Activated CD4-positive, alpha-beta T cell treated with anti-CD3 and anti-CD28 coated beads for 36 hours (primary cell): ENCODE measurements at regions of chr1 and their contacts with region 1.

Region 1: GRCh38 chr1:214281021-214281719 is at the start of gene SMYD2:
- DNase-seq: peak; percentile 82
- ATAC-seq: peak; percentile 74
- H3K4me3 Mint-ChIP-seq: peak within 1 kb of the TSS; percentile 92
- H3K27ac Mint-ChIP-seq: peak within 1 kb of the TSS; percentile 89
- H3K4me1 Mint-ChIP-seq: peaks cover 37% of the 10 kb centered on the region
- H3K27me3 Mint-ChIP-seq: no peaks in the 10 kb centered on the region
- total RNA-seq, gene SMYD2: 38.2 to 40.1 TPM

Region 2: GRCh38 chr1:213783893-213784292 is 497.3 kb before region 1 on chr1:
- CTCF ChIA-PET with region 1: no interaction called
- POLR2A ChIA-PET with region 1: no interaction called
- intact Hi-C with region 1: no loop called
- DNase-seq: no peak
- ATAC-seq: no peak
- H3K4me3 Mint-ChIP-seq: no peak overlapping the region
- H3K27ac Mint-ChIP-seq: no peak overlapping the region
- H3K4me1 Mint-ChIP-seq: peaks cover 15% of the 10 kb centered on the region
- H3K27me3 Mint-ChIP-seq: peaks cover 17% of the 10 kb centered on the region

Region 3: DNA sequence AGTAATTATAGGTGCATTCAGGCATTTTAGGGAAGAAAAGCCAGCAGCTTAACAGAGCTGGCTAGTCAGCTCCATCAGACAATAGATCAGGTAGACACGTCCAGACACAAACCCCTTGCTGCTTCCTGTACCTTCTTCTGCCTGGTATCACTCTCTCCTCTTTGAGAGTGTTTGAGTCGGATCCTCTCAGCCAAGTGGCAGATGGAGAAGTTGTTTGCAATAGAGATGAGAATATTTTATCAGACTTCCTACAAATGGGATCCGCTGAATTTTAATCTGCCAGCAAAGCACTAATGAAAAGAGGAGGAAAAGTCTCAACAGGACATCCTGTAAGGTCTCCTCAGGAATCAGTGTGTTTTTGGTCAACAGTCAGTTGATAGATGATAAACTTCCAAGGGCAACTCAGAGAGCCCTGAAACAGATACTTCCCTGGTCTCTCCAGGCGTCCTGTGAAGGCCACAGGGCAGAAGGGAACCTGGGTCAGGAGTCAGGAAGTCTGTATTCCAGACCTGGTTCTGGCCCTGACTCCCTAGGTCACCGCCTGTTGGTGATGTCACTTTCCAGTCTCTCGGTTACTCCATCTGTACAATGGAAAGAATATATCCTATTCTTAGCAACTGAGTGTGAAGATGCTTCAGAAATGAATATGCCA is 355.5 kb before region 1 on chr1:
- CTCF ChIA-PET with region 1: no interaction called
- POLR2A ChIA-PET with region 1: no interaction called
- intact Hi-C with region 1: no loop called
- DNase-seq: no peak
- ATAC-seq: no peak
- H3K4me3 Mint-ChIP-seq: no peak overlapping the region
- H3K27ac Mint-ChIP-seq: no peak overlapping the region
- H3K4me1 Mint-ChIP-seq: no peaks in the 10 kb centered on the region
- H3K27me3 Mint-ChIP-seq: no peaks in the 10 kb centered on the region

Region 4: GRCh38 chr1:214310010-214310409 is 28.8 kb after region 1 on chr1:
- CTCF ChIA-PET with region 1: no interaction called
- POLR2A ChIA-PET with region 1: no interaction called
- intact Hi-C with region 1: loop called in 1 of 2 experiments (anchors 2 kb)
- DNase-seq: no peak
- ATAC-seq: peak; percentile 72
- H3K4me3 Mint-ChIP-seq: no peak overlapping the region
- H3K27ac Mint-ChIP-seq: no peak overlapping the region
- H3K4me1 Mint-ChIP-seq: peaks cover 28% of the 10 kb centered on the region
- H3K27me3 Mint-ChIP-seq: no peaks in the 10 kb centered on the region

Region 5: GRCh38 chr1:214427871-214428277 is 146.7 kb after region 1 on chr1:
- CTCF ChIA-PET with region 1: no interaction called
- POLR2A ChIA-PET with region 1: no interaction called
- intact Hi-C with region 1: loop called in 1 of 2 experiments (anchors 5 kb)
- DNase-seq: peak; percentile 84
- ATAC-seq: peak; percentile 99
- H3K4me3 Mint-ChIP-seq: peak overlapping the region; percentile 36
- H3K27ac Mint-ChIP-seq: peak overlapping the region; percentile 91
- H3K4me1 Mint-ChIP-seq: peaks cover 28% of the 10 kb centered on the region
- H3K27me3 Mint-ChIP-seq: no peaks in the 10 kb centered on the region